CD4-positive, alpha-beta memory T cell (primary cell): ENCODE measurements at regions of chr2 and their contacts with region 1.

Region 1: GRCh38 chr2:42196403-42197267 is 27.5 kb downstream of the EML4 start:
- DNase-seq: peak; percentile 56 to 66 (median 63)
- H3K4me3 ChIP-seq: no peak overlapping the region
- H3K4me3 Mint-ChIP-seq: peak overlapping the region in 7 of 8 donors; percentile 7 to 67 (median 51)
- H3K27ac ChIP-seq: no peak overlapping the region
- H3K27ac Mint-ChIP-seq: peak overlapping the region; percentile 40 to 87 (median 74)
- H3K4me1 ChIP-seq: peaks cover 97% of the 10 kb centered on the region
- H3K4me1 Mint-ChIP-seq: peaks cover 59 to 94% (median 74%) of the 10 kb centered on the region in 4 donors
- H3K27me3 ChIP-seq: no peaks in the 10 kb centered on the region
- H3K27me3 Mint-ChIP-seq: no peaks in the 10 kb centered on the region

Region 2: GRCh38 chr2:41840702-41841551 is 355.7 kb before region 1 on chr2:
- CTCF ChIA-PET with region 1: no interaction called
- POLR2A ChIA-PET with region 1: interaction called, 3 read pairs
- intact Hi-C with region 1: loop called (anchors 2 kb)
- DNase-seq: peak; percentile 97 to 98 (median 97)
- H3K4me3 ChIP-seq: peak overlapping the region; percentile 85 to 86
- H3K4me3 Mint-ChIP-seq: peak overlapping the region; percentile 90 to 100 (median 96)
- H3K27ac ChIP-seq: peak overlapping the region; percentile 75
- H3K27ac Mint-ChIP-seq: peak overlapping the region; percentile 85 to 98 (median 94)
- H3K4me1 ChIP-seq: peaks cover 10% of the 10 kb centered on the region
- H3K4me1 Mint-ChIP-seq: peaks cover 5 to 16% (median 11%) of the 10 kb centered on the region in 4 donors
- H3K27me3 ChIP-seq: peaks cover 3% of the 10 kb centered on the region
- H3K27me3 Mint-ChIP-seq: peaks cover 11 to 16% of the 10 kb centered on the region in 2 donors

Region 3: DNA sequence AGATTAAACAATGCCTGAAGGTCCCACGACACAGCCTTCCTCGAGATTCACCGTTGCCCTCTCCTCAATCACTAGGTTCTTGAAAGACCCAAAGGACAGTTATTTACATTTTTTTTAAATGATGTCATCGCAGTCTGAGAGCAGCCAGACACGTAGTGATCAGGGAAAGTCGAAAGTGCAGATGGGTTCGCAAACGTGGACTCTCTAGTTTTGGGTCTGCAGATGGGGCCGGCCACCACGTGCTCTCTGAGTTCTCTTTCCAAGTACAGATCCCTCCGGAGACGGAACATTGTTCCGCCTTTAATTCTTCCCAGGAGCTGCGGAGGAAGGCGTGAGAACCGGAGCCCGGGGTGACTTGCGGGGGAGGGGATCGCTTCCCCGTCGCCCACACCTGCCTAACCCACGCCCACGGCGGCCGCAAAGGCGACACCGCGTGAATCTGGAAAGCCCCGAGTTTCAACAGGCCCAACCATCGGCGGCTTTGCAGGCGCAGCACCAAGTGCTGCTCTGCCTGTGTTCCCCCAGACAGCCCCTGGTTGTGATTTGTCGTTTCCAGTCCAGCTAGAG is 94.5 kb before region 1 on chr2:
- CTCF ChIA-PET with region 1: interaction called, 128 read pairs
- POLR2A ChIA-PET with region 1: interaction called, 10 read pairs
- intact Hi-C with region 1: no loop called
- DNase-seq: peak; percentile 96 to 98 (median 96)
- H3K4me3 ChIP-seq: peak overlapping the region; percentile 53 to 64
- H3K4me3 Mint-ChIP-seq: peak overlapping the region in 7 of 8 donors; percentile 85 to 90 (median 87)
- H3K27ac ChIP-seq: peak overlapping the region; percentile 100
- H3K27ac Mint-ChIP-seq: no peak overlapping the region
- H3K4me1 ChIP-seq: peaks cover 94% of the 10 kb centered on the region
- H3K4me1 Mint-ChIP-seq: peaks cover 38 to 64% (median 51%) of the 10 kb centered on the region in 4 donors
- H3K27me3 ChIP-seq: no peaks in the 10 kb centered on the region
- H3K27me3 Mint-ChIP-seq: no peaks in the 10 kb centered on the region

Region 4: DNA sequence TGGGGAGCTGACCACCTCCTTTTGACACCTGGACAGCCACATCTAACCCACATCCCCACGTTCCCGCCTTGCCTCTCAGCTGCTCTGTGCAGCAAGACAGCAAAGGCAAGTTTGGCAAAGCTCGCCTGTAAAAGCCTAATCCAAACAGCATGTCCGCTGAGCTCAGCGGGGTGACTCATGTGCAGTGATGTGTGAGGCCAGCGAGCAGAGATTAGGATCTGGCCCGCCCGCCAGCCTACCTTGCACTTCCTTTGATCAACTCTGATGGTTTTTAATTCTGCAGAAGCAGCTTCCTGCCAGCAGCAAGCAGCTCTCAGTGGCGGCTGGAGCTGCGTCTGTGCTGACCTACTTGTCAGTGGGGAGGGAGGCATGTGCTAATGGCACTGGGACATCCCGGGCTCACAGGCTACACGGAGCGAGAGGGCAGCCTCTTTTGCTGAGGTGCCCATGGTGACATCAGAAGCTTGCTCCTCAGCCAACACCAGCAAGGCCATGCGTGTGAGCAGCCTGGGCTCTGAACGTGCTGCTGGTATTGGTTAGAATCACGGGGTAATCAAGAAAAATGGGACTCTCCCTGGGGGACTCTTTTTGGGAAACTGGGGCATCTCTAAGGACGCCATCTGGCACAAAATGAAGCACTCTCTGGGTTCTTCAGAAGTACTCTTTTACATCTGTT is 63.5 kb before region 1 on chr2:
- CTCF ChIA-PET with region 1: interaction called, 31 read pairs
- POLR2A ChIA-PET with region 1: interaction called, 7 read pairs
- intact Hi-C with region 1: loop called (anchors 1 kb)
- DNase-seq: peak; percentile 92 to 99 (median 96)
- H3K4me3 ChIP-seq: peak overlapping the region; percentile 16 to 21
- H3K4me3 Mint-ChIP-seq: peak overlapping the region; percentile 58 to 88 (median 76)
- H3K27ac ChIP-seq: peak overlapping the region; percentile 93
- H3K27ac Mint-ChIP-seq: peak overlapping the region; percentile 88 to 100 (median 99)
- H3K4me1 ChIP-seq: peaks cover 99% of the 10 kb centered on the region
- H3K4me1 Mint-ChIP-seq: peaks cover 68 to 100% (median 88%) of the 10 kb centered on the region in 4 donors
- H3K27me3 ChIP-seq: no peaks in the 10 kb centered on the region
- H3K27me3 Mint-ChIP-seq: no peaks in the 10 kb centered on the region

Region 5: DNA sequence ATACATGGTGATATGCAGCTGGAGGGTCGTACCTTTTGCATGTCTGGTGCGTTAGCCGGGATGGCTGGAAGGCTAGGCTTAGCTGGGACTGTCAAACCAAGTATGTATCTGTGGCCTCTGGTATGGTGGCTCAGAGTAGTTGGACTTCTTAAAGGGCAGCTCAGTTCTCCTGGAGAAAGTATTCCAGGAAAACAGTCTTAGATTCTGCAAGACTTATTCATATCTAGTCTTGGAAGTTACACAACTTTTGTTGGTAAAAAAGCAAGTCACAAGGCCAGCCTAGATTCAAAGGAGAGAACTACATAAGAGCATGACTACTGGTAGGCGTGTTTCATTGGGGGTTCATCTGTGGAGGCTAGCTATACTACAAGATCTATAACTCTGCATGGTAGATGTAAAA is 18.0 kb after region 1 on chr2:
- CTCF ChIA-PET with region 1: no interaction called
- POLR2A ChIA-PET with region 1: no interaction called
- intact Hi-C with region 1: no loop called
- DNase-seq: no peak
- H3K4me3 ChIP-seq: no peak overlapping the region
- H3K4me3 Mint-ChIP-seq: peak overlapping the region in 3 of 8 donors; percentile 8 to 43 (median 41)
- H3K27ac ChIP-seq: no peak overlapping the region
- H3K27ac Mint-ChIP-seq: peak overlapping the region in 5 of 7 donors; percentile 6 to 70 (median 16)
- H3K4me1 ChIP-seq: peaks cover 89% of the 10 kb centered on the region
- H3K4me1 Mint-ChIP-seq: peaks cover 53 to 92% (median 66%) of the 10 kb centered on the region in 4 donors
- H3K27me3 ChIP-seq: no peaks in the 10 kb centered on the region
- H3K27me3 Mint-ChIP-seq: no peaks in the 10 kb centered on the region

Region 6: GRCh38 chr2:42238644-42239288 is 42.1 kb after region 1 on chr2:
- CTCF ChIA-PET with region 1: interaction called, 4 read pairs
- POLR2A ChIA-PET with region 1: no interaction called
- intact Hi-C with region 1: loop called (anchors 5 kb)
- DNase-seq: peak; percentile 40 to 51 (median 48)
- H3K4me3 ChIP-seq: no peak overlapping the region
- H3K4me3 Mint-ChIP-seq: peak overlapping the region in 5 of 8 donors; percentile 20 to 51 (median 39)
- H3K27ac ChIP-seq: no peak overlapping the region
- H3K27ac Mint-ChIP-seq: peak overlapping the region in 6 of 7 donors; percentile 43 to 80 (median 64)
- H3K4me1 ChIP-seq: peaks cover 99% of the 10 kb centered on the region
- H3K4me1 Mint-ChIP-seq: peaks cover 64 to 92% (median 81%) of the 10 kb centered on the region in 4 donors
- H3K27me3 ChIP-seq: no peaks in the 10 kb centered on the region
- H3K27me3 Mint-ChIP-seq: no peaks in the 10 kb centered on the region

Region 7: DNA sequence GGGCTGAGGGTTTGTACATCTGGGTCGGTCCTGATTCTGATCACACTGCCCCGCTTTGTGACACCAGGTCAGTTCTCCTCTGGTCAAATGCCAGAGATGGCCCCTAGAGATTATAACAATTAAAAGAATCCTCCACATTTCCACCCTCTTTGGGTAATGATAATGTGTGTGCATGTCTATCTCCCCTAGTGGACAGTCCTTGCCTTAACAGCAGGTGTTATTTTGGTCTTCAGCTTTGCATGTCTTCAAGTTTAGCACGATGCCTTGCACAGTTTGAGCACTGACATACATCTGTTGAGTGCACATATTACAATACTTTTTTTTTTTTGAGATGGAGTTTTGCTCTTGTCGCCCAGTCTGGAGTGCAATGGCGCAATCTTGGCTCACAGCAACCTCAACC is 190.0 kb after region 1 on chr2:
- CTCF ChIA-PET with region 1: no interaction called
- POLR2A ChIA-PET with region 1: no interaction called
- intact Hi-C with region 1: no loop called
- DNase-seq: no peak
- H3K4me3 ChIP-seq: no peak overlapping the region
- H3K4me3 Mint-ChIP-seq: no peak overlapping the region
- H3K27ac ChIP-seq: no peak overlapping the region
- H3K27ac Mint-ChIP-seq: no peak overlapping the region
- H3K4me1 ChIP-seq: no peaks in the 10 kb centered on the region
- H3K4me1 Mint-ChIP-seq: peaks cover 0 to 1% (median 0%) of the 10 kb centered on the region in 4 donors
- H3K27me3 ChIP-seq: no peaks in the 10 kb centered on the region
- H3K27me3 Mint-ChIP-seq: peaks cover 2 to 9% of the 10 kb centered on the region in 2 donors